Psoas muscle (tissue), 8 donors: ENCODE measurements at regions of chr9 and their contacts with region 1.

Region 1: DNA sequence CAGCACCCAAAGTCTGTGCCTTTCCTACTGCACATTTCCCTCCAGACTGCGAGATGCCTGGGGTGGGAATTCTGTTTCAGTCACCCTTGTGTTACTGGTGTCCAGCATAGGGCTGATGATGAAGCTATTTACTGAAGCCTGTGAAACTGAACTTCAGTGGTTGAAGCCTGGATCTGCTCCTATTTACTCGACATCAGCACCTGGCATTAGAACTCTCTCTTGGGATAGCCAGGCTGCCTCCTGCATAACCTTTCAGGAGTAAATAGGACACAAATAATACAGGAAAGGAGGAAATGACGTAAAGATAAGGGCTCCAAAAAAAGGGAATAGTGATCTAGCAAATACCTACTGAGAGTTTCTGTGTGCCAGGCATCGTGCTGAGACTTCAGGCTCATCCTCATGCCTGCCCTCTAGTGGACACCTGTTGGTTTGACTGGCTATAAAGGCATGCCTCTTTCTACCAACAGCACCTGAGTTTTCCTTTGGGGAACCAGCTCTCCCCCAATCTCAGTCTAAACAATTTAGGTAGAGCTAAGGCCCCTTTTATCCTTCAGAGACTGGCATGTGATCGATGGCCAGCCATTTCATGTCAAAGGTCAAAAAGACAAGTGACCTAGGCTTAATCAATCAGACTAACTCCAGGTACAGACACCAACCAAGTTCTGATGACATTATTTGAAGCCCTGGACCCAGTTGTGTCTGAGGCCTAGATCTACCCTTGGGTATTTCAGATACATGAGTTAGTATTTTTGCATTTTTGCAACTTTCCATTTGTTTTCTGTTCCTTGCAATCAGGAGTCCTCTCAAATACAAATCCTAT is 192.1 kb upstream of the TRIM32 start:
- DNase-seq: no peak
- ATAC-seq: peak in 2 of 4 donors; percentile 65 to 72
- H3K4me3 ChIP-seq: no peak overlapping the region
- H3K27ac ChIP-seq: no peak overlapping the region
- H3K4me1 ChIP-seq: no peaks in the 10 kb centered on the region
- H3K27me3 ChIP-seq: no peaks in the 10 kb centered on the region
- CTCF ChIP-seq: peak; percentile 68

Region 2: GRCh38 chr9:115591584-115591984 is 903.4 kb before region 1 on chr9:
- intact Hi-C with region 1: loop called in 1 of 2 experiments (anchors 5 kb)
- DNase-seq: peak; percentile 60 to 71
- ATAC-seq: peak; percentile 79 to 98 (median 98)
- H3K4me3 ChIP-seq: no peak overlapping the region
- H3K27ac ChIP-seq: no peak overlapping the region
- H3K4me1 ChIP-seq: no peaks in the 10 kb centered on the region
- H3K27me3 ChIP-seq: peaks cover 0 to 8% (median 2%) of the 10 kb centered on the region in 3 donors
- CTCF ChIP-seq: peak; percentile 33

Region 3: DNA sequence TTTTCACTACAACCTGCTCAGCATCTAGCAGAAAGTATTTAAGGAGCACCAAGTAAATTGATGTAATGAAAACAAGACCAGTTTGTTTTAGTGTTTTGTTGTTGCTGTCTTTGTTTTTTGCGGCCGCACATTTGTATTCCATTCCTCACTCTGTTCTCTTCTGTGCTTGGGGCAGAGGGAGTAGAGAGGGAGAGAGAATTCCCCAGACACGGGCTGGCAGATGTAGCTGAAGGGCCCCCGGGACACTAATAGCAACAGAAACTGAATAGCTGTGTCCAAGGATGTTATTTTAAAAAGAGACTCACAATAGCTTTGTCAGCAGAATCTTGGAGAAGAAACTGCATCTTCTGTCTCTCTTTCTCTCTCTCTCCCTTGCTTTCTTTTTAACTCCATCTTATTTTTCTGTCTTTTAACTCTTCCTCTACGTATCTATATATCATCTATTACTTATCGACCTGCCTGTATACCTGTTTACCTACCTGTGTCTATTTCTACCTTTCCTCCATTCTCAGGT is 196.1 kb before region 1 on chr9:
- intact Hi-C with region 1: loop called in 1 of 2 experiments (anchors 10 kb)
- DNase-seq: no peak
- ATAC-seq: no peak
- H3K4me3 ChIP-seq: no peak overlapping the region
- H3K27ac ChIP-seq: no peak overlapping the region
- H3K4me1 ChIP-seq: no peaks in the 10 kb centered on the region
- H3K27me3 ChIP-seq: no peaks in the 10 kb centered on the region
- CTCF ChIP-seq: no peak

Region 4: DNA sequence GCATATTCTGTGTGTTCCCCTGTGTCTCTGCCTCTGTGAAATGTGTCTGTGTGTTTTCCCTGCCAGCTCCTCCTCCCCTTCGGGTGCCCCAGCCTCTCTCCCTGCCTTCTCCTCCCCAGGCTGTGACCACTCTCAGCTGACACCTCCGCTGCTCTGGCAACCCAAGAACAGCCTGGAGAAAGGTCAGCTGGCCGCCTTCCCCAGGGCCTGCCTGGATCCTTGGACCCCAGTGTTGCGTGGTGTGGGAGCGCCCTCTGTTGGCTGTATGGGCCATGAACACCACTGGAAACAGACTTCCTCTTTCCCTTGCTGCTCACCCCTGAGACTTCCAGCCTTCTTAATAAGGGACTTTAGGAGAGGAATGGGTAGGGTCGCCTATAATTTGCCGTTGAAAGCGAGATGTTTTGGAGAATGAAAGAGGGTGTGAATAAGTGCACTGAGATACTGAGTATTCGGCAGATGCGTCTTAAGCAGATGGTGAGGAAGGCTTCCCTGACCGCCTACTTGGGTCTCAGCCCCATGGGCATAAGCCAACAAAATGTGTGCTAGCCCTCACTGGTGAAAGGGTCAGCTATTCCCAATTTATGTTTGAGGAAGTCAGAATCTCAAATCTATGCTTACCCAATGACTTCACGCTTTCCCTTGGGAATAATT is 77.2 kb after region 1 on chr9:
- intact Hi-C with region 1: loop called in 1 of 2 experiments (anchors 10 kb)
- DNase-seq: peak; percentile 90 to 95
- ATAC-seq: peak; percentile 97 to 100 (median 98)
- H3K4me3 ChIP-seq: no peak overlapping the region
- H3K27ac ChIP-seq: no peak overlapping the region
- H3K4me1 ChIP-seq: no peaks in the 10 kb centered on the region
- H3K27me3 ChIP-seq: no peaks in the 10 kb centered on the region
- CTCF ChIP-seq: peak; percentile 86

Region 5: GRCh38 chr9:116646661-116647512 is 151.9 kb after region 1 on chr9:
- intact Hi-C with region 1: loop called (anchors 10 kb)
- DNase-seq: no peak
- ATAC-seq: peak in 3 of 4 donors; percentile 65 to 76 (median 74)
- H3K4me3 ChIP-seq: no peak overlapping the region
- H3K27ac ChIP-seq: no peak overlapping the region
- H3K4me1 ChIP-seq: peaks cover 37% of the 10 kb centered on the region
- H3K27me3 ChIP-seq: no peaks in the 10 kb centered on the region
- CTCF ChIP-seq: peak; percentile 49

Region 6: DNA sequence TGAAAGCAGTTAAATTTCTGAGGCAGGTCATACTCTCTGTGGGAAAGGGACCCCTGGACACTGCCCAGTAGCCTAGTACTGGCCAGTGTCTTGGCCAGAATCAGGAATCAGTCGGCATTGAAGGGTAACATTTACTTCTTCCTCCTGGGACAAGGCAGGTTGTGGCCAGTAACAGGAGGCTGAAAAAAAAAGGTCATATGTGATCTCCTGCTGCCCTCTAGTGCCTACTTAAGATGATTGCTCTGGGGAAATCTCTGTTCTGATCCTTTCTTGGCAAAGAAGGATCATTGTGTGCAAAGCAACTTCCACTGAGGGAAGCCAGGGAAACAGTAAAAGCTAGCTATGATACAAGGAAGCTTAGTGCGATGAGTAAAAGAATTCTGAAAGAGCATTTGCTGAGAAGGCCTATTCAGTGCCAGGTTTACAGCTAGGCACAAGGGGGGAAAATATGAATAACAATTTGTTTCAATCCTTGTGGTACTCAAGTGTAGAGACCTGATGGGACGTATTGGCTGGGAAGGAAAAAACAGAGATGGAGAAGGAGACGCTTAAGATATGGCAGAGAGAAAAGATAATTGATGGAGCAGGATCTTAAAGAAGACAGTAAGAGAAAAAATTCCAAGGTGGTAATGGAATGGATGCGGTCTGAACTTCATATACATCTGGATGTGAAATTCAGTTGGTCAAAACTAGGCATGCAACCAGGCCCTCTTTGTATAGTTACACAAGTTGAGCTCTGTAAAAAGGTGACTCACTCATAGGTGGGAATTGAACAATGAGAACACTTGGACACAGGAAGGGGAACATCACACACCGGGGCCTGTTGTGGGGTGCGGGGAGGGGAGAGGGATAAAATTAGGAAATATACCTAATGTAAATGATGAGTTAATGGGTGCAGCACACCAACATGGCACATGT is 166.3 kb after region 1 on chr9:
- intact Hi-C with region 1: loop called in 1 of 2 experiments (anchors 10 kb)
- DNase-seq: no peak
- ATAC-seq: peak; percentile 78 to 95 (median 90)
- H3K4me3 ChIP-seq: no peak overlapping the region
- H3K27ac ChIP-seq: no peak overlapping the region
- H3K4me1 ChIP-seq: peaks cover 10% of the 10 kb centered on the region
- H3K27me3 ChIP-seq: no peaks in the 10 kb centered on the region
- CTCF ChIP-seq: peak; percentile 78